ENCODE measurements at regions of chr6 and their contacts with region 1.

Region 1: GRCh38 chr6:151335930-151336329 is 55.4 kb downstream of the ZBTB2 start:
- DNase-seq: no peak
- ATAC-seq: no peak
- H3K4me3 Mint-ChIP-seq: no peak overlapping the region
- H3K27ac Mint-ChIP-seq: no peak overlapping the region
- H3K4me1 Mint-ChIP-seq: peaks cover 3% of the 10 kb centered on the region
- H3K27me3 Mint-ChIP-seq: peaks cover 4% of the 10 kb centered on the region
- CTCF ChIP-seq: no peak

Region 2: DNA sequence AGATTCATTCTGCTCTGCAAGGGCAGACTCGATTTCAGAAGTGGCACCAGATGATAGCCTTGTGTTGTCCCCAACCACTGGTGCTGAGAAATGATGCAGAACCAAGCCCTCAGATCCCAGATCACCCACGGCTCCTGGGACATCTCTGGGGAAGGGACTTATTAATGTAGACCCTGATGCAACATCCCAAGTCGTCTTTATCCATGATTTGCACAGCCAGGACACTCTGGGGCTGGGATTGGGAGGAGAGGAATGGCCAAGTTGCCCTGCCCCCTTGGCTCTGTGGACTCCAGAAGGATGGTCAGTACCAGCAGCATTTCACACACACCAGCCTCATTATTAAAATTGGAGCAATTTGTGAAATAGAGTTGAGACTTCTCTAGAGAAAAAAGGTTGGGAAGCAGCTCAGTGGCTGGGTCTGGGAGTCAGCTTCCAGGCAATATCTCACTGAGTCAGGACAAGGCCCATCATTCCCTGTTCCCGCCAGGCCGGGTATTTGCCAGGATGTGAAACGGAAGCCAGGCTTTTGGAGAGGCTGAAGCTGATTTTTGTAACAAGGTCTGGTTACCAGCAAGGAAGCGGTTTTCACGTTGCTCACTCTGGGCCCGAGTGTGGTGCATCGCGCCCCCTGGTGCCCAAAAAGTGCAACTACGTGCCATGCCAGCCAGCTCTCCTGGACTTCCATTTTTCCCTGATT is 12.0 kb before region 1 on chr6:
- CTCF ChIA-PET with region 1: interaction called, 21 read pairs
- POLR2A ChIA-PET with region 1: interaction called, 4 read pairs
- intact Hi-C with region 1: no loop called
- DNase-seq: peak; percentile 61
- ATAC-seq: peak; percentile 84
- H3K4me3 Mint-ChIP-seq: peak overlapping the region; percentile 53
- H3K27ac Mint-ChIP-seq: no peak overlapping the region
- H3K4me1 Mint-ChIP-seq: peaks cover 23% of the 10 kb centered on the region
- H3K27me3 Mint-ChIP-seq: peaks cover 30% of the 10 kb centered on the region
- CTCF ChIP-seq: no peak

Measured in activated B cell treated with CpG ODN at 0.5 μM for 24 hours (primary cell).